Naive thymus-derived CD4-positive, alpha-beta T cell (primary cell): ENCODE measurements at regions of chr14 and their contacts with region 1.

Region 1: GRCh38 chr14:21917699-21918436 is 244.2 kb upstream of the OR4E1 start:
- DNase-seq: peak in 7 of 9 donors; percentile 60 to 73 (median 64)
- ATAC-seq: peak; percentile 78
- H3K4me3 ChIP-seq: peak overlapping the region; percentile 49
- H3K4me3 Mint-ChIP-seq: peak overlapping the region; percentile 64 to 93 (median 84)
- H3K27ac ChIP-seq: peak overlapping the region; percentile 44
- H3K27ac Mint-ChIP-seq: peak overlapping the region; percentile 76 to 94 (median 85)
- H3K4me1 ChIP-seq: peaks cover 10 to 49% of the 10 kb centered on the region in 2 donors
- H3K4me1 Mint-ChIP-seq: peaks cover 12 to 83% (median 68%) of the 10 kb centered on the region in 7 donors
- H3K27me3 ChIP-seq: no peaks in the 10 kb centered on the region
- H3K27me3 Mint-ChIP-seq: no peaks in the 10 kb centered on the region

Region 2: GRCh38 chr14:21902650-21903103 is 15.2 kb before region 1 on chr14:
- CTCF ChIA-PET with region 1: interaction called, 10 read pairs
- POLR2A ChIA-PET with region 1: interaction called, 6 read pairs
- intact Hi-C with region 1: loop called in 1 of 2 experiments (anchors 1 kb)
- DNase-seq: peak in 5 of 9 donors; percentile 30 to 57 (median 41)
- ATAC-seq: peak; percentile 87
- H3K4me3 ChIP-seq: peak overlapping the region; percentile 17
- H3K4me3 Mint-ChIP-seq: peak overlapping the region; percentile 62 to 84 (median 72)
- H3K27ac ChIP-seq: peak overlapping the region; percentile 14
- H3K27ac Mint-ChIP-seq: peak overlapping the region; percentile 60 to 91 (median 86)
- H3K4me1 ChIP-seq: no peaks in the 10 kb centered on the region
- H3K4me1 Mint-ChIP-seq: peaks cover 10 to 39% (median 25%) of the 10 kb centered on the region in 7 donors
- H3K27me3 ChIP-seq: no peaks in the 10 kb centered on the region
- H3K27me3 Mint-ChIP-seq: peaks cover 0 to 13% (median 0%) of the 10 kb centered on the region in 5 donors

Region 3: DNA sequence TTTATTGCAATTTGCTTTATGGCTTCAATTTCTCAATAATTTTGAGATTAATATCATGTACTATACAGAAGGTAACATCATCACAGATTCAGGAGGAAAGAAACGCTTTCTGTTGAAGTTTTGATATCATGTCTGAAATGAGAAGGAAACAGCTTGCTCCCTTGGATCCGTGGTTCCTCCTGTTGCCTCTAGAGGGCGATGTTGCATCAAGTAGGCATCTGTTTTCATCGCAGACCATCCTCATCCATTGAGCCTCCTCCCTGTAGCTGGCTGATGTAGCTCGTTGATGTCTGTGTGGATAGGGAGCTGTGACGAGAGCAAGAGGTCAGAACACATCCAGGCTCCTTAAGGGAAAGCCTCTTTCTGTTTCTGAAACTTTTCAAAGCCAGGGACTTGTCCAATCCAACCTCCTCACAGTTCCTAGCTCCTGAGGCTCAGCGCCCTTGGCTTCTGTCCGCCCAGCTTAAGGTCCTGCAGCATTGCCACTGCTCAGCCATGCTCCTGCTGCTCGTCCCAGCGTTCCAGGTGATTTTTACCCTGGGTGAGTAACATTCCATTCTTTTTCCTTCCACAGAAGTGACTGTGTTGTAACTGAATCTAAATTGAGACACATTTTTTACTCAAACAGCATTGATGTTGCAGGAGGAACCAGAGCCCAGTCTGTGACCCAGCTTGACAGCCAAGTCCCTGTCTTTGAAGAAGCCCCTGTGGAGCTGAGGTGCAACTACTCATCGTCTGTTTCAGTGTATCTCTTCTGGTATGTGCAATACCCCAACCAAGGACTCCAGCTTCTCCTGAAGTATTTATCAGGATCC is 60.5 kb after region 1 on chr14:
- CTCF ChIA-PET with region 1: interaction called, 17 read pairs
- POLR2A ChIA-PET with region 1: interaction called, 4 read pairs
- intact Hi-C with region 1: loop called in 1 of 2 experiments (anchors 5 kb)
- DNase-seq: peak; percentile 20 to 71 (median 61)
- ATAC-seq: peak; percentile 85
- H3K4me3 ChIP-seq: peak overlapping the region; percentile 9
- H3K4me3 Mint-ChIP-seq: peak overlapping the region; percentile 43 to 84 (median 74)
- H3K27ac ChIP-seq: peak overlapping the region; percentile 26
- H3K27ac Mint-ChIP-seq: peak overlapping the region in 8 of 9 donors; percentile 60 to 85 (median 76)
- H3K4me1 ChIP-seq: peaks cover 0 to 4% of the 10 kb centered on the region in 2 donors
- H3K4me1 Mint-ChIP-seq: peaks cover 6 to 51% (median 25%) of the 10 kb centered on the region in 7 donors
- H3K27me3 ChIP-seq: no peaks in the 10 kb centered on the region
- H3K27me3 Mint-ChIP-seq: peaks cover 0 to 31% (median 0%) of the 10 kb centered on the region in 5 donors

Region 4: GRCh38 chr14:22084393-22085281 is 166.8 kb after region 1 on chr14:
- CTCF ChIA-PET with region 1: no interaction called
- POLR2A ChIA-PET with region 1: no interaction called
- intact Hi-C with region 1: loop called in 1 of 2 experiments (anchors 10 kb)
- DNase-seq: peak in 6 of 9 donors; percentile 37 to 62 (median 52)
- ATAC-seq: peak; percentile 76
- H3K4me3 ChIP-seq: no peak overlapping the region
- H3K4me3 Mint-ChIP-seq: peak overlapping the region; percentile 41 to 76 (median 62)
- H3K27ac ChIP-seq: no peak overlapping the region
- H3K27ac Mint-ChIP-seq: peak overlapping the region; percentile 60 to 87 (median 75)
- H3K4me1 ChIP-seq: peaks cover 0 to 4% of the 10 kb centered on the region in 2 donors
- H3K4me1 Mint-ChIP-seq: peaks cover 2 to 40% (median 36%) of the 10 kb centered on the region in 7 donors
- H3K27me3 ChIP-seq: no peaks in the 10 kb centered on the region
- H3K27me3 Mint-ChIP-seq: no peaks in the 10 kb centered on the region

Region 5: DNA sequence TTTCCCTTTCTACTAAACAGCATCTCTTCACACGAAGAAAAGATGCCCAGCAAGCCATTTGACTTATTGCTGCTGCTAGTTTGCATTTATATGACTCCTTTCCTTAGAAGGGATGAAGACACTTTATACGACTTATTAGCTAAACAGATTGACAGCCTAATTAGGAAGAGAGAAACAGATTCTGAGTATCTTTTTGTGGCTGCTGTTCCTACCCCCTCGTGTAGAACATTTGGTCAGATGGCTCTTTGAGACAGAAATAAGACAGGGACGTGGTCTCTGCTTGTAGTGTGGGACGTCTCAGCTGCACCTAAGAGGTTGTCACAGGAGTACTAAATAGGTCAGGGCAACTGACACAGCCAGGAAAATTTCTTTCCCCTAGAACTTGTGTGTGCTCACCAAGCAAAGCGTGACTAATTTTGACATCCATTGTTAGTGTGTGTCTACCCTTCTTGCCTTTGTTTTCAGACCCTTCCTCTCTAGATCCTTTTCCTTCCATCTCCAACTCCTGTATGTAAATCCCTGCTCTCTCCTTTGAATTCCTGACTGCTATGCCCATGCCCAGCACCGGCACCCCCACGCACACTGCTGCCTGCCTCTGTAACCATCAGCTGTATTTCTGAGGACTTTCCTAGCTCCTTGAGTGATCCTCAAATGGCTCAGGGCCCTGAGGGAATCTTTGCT is 588.0 kb after region 1 on chr14:
- CTCF ChIA-PET with region 1: interaction called, 7 read pairs
- POLR2A ChIA-PET with region 1: interaction called, 4 read pairs
- intact Hi-C with region 1: loop called in 1 of 2 experiments (anchors 5 kb)
- DNase-seq: no peak
- ATAC-seq: peak; percentile 39
- H3K4me3 ChIP-seq: peak overlapping the region; percentile 51
- H3K4me3 Mint-ChIP-seq: peak overlapping the region; percentile 79 to 95 (median 87)
- H3K27ac ChIP-seq: peak overlapping the region; percentile 90
- H3K27ac Mint-ChIP-seq: peak overlapping the region; percentile 92 to 99 (median 96)
- H3K4me1 ChIP-seq: peaks cover 30 to 40% of the 10 kb centered on the region in 2 donors
- H3K4me1 Mint-ChIP-seq: peaks cover 19 to 82% (median 64%) of the 10 kb centered on the region in 7 donors
- H3K27me3 ChIP-seq: no peaks in the 10 kb centered on the region
- H3K27me3 Mint-ChIP-seq: no peaks in the 10 kb centered on the region